Posterior cingulate gyrus (tissue), 11 donors: ENCODE measurements at regions of chr15 and their contacts with region 1.

Region 1: DNA sequence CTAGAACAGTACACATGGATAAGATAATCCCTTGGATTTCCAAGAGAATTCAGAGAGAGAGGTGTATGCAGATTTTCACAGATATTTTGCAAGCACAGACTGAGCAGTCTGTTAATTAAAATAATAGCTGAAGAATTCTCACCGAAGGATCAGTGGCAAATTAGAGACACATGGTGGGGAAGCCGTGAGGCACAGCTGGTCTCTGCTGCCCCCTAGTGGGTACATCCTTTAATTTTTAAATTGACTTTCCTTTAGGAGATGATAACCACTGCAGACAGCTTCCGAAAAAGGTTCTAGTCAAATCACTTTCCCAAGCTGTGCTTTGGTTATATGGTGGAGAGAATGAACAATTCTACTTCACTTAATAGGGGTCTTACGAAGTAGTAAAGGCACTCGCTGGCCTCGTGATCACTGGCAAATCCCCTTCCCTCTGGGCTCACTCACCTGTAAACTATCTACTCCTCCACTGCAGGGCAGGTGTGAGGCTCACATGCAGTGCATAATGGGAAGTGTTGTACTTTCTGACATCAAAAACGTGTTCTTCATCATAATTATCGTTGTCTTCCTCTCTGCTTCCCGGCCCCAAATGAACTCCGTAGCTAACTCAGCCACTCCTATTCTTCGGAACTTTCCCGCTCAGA is 19.5 kb downstream of the MESD start:
- DNase-seq: peak in 8 of 10 donors; percentile 39 to 92 (median 66)

Region 2: DNA sequence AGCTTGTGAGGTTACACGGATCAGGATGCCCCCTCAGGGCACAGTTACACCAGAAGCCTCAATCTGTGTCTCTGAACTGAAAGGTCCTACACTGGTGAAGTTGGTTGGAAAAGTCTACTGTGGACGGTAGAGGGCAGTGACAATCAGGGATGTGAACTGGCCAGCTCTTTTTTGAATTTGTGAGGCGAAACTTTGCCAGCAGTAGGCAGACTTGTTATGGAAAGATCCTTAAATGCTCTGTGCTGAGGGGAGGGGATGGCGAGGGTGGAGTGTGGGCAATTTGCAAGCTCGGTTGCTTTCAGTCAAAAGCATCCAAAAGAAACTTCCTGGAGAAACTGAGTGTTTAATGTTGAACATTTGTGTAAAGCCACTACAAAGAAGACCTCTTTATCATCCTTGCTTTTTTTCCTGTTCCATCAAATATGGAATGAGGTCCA is 402.4 kb before region 1 on chr15:
- intact Hi-C with region 1: loop called (anchors 5 kb)
- DNase-seq: peak; percentile 27 to 94 (median 50)

Region 3: DNA sequence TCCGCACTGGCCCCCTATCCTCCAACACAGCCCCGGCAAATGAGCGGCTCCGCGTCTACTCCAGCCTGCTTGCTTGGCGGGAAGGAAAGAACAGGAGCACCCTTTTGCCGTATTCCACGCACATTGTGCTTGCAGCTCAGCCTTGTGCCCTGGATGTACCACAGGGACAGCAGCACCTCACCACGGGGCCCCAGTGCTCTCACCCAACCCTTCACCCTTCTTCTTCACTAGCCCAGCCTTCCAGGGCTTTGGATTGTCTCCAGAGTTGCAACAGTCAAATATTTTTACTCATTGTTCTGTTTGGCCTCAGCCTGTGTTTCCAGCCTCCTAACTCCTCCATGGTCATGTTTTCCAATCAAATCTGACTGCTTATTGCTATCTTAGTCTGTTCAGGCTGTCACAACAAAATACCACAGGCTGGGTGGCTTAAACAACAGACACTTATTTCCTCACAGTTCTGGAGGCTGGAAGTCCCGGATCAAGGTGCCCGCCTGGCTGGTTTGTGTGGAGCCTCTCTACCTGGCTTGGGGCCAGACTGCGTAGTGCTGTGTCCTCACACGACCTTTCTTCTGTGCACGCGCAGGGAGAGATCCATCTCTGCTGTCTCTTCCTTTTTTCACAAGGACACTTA is 354.3 kb before region 1 on chr15:
- intact Hi-C with region 1: loop called (anchors 5 kb)
- DNase-seq: peak in 2 of 10 donors; percentile 71 to 74

Region 4: GRCh38 chr15:81133782-81134461 is 163.8 kb after region 1 on chr15 and contains the start of gene CFAP161:
- intact Hi-C with region 1: no loop called
- DNase-seq: peak; percentile 76 to 98 (median 88)